OCI-LY7 (cell line): ENCODE measurements at regions of chr12 and their contacts with region 1.

Region 1: GRCh38 chr12:1318327-1319031 is 275.9 kb downstream of the FBXL14 start:
- DNase-seq: peak; percentile 44
- H3K4me3 ChIP-seq: no peak overlapping the region
- H3K27ac ChIP-seq: peak overlapping the region; percentile 48
- H3K4me1 ChIP-seq: peaks cover 50% of the 10 kb centered on the region
- CTCF ChIP-seq: no peak

Region 2: GRCh38 chr12:1117970-1118563 is 200.4 kb before region 1 on chr12:
- CTCF ChIA-PET with region 1: no interaction called
- POLR2A ChIA-PET with region 1: no interaction called
- intact Hi-C with region 1: loop called (anchors 5 kb)
- DNase-seq: peak; percentile 81
- H3K4me3 ChIP-seq: no peak overlapping the region
- H3K27ac ChIP-seq: no peak overlapping the region
- H3K4me1 ChIP-seq: peaks cover 4% of the 10 kb centered on the region
- CTCF ChIP-seq: peak; percentile 99

Region 3: GRCh38 chr12:1204581-1205121 is 113.8 kb before region 1 on chr12:
- CTCF ChIA-PET with region 1: no interaction called
- POLR2A ChIA-PET with region 1: interaction called, 7 read pairs
- intact Hi-C with region 1: loop called (anchors 2 kb)
- DNase-seq: peak; percentile 86
- H3K4me3 ChIP-seq: peak overlapping the region; percentile 72
- H3K27ac ChIP-seq: peak overlapping the region; percentile 100
- H3K4me1 ChIP-seq: peaks cover 63% of the 10 kb centered on the region
- CTCF ChIP-seq: no peak

Region 4: DNA sequence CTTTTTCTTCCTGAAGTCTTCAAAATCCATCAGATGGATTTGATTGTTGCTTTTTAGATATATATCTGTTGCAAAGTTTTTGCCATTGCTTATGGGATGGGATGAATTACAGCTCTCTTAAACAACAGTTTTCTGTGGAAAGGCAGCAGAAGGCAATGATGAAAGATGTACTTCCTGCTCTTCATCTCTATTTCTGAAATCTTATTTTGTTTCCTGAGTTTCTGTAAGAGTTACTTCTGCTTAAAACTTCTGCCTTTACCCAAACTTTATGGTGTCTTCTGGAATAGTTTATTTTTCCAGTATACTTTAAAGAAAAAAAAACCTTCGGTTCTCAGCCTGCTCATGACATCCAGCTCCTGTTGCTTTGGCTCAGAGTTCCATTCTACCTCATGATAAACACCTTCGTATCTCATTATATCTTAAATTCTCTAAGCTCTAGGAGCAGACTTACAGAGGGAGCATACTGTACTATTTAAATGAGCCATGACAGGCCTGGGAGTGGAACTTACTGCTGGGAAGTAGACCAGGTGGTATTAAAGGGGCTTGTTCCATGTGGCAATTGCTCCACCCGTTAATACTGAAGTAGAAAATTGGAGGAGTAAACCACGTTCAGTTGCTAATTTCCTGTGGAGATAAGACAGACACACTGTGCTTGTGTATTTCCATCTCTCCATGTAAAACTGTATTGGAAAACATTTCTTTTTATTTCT is 12.5 kb before region 1 on chr12:
- CTCF ChIA-PET with region 1: no interaction called
- POLR2A ChIA-PET with region 1: interaction called, 19 read pairs
- intact Hi-C with region 1: no loop called
- DNase-seq: peak; percentile 24
- H3K4me3 ChIP-seq: peak overlapping the region; percentile 15
- H3K27ac ChIP-seq: peak overlapping the region; percentile 63
- H3K4me1 ChIP-seq: peaks cover 60% of the 10 kb centered on the region
- CTCF ChIP-seq: no peak

Region 5: GRCh38 chr12:1553987-1554982 is 235.8 kb after region 1 on chr12:
- CTCF ChIA-PET with region 1: no interaction called
- POLR2A ChIA-PET with region 1: no interaction called
- intact Hi-C with region 1: loop called (anchors 2 kb)
- DNase-seq: peak; percentile 96
- H3K4me3 ChIP-seq: peak overlapping the region; percentile 49
- H3K27ac ChIP-seq: peak overlapping the region; percentile 89
- H3K4me1 ChIP-seq: peaks cover 45% of the 10 kb centered on the region
- CTCF ChIP-seq: no peak